CD8-positive, alpha-beta memory T cell (primary cell): ENCODE measurements at regions of chr5 and their contacts with region 1.

Region 1: GRCh38 chr5:52657247-52657645 is 130.5 kb upstream of the ITGA1 start:
- DNase-seq: peak in 2 of 5 donors; percentile 29 to 39
- H3K4me3 ChIP-seq: no peak overlapping the region
- H3K4me3 Mint-ChIP-seq: no peak overlapping the region
- H3K27ac ChIP-seq: no peak overlapping the region
- H3K27ac Mint-ChIP-seq: no peak overlapping the region
- H3K4me1 ChIP-seq: peaks cover 4% of the 10 kb centered on the region
- H3K4me1 Mint-ChIP-seq: peaks cover 0 to 5% (median 0%) of the 10 kb centered on the region in 3 donors
- H3K27me3 ChIP-seq: peaks cover 5% of the 10 kb centered on the region
- H3K27me3 Mint-ChIP-seq: peaks cover 2 to 25% of the 10 kb centered on the region in 2 donors

Region 2: GRCh38 chr5:50958852-50959457 is 1698.3 kb before region 1 on chr5:
- CTCF ChIA-PET with region 1: interaction called, 14 read pairs
- POLR2A ChIA-PET with region 1: no interaction called
- DNase-seq: no peak
- H3K4me3 ChIP-seq: no peak overlapping the region
- H3K4me3 Mint-ChIP-seq: no peak overlapping the region
- H3K27ac ChIP-seq: no peak overlapping the region
- H3K27ac Mint-ChIP-seq: no peak overlapping the region
- H3K4me1 ChIP-seq: peaks cover 11% of the 10 kb centered on the region
- H3K4me1 Mint-ChIP-seq: peaks cover 8 to 13% (median 13%) of the 10 kb centered on the region in 3 donors
- H3K27me3 ChIP-seq: peaks cover 12% of the 10 kb centered on the region
- H3K27me3 Mint-ChIP-seq: peaks cover 20 to 77% of the 10 kb centered on the region in 2 donors

Region 3: GRCh38 chr5:50965654-50966375 is 1691.4 kb before region 1 on chr5:
- CTCF ChIA-PET with region 1: interaction called, 5 read pairs
- POLR2A ChIA-PET with region 1: interaction called, 10 read pairs
- DNase-seq: no peak
- H3K4me3 ChIP-seq: no peak overlapping the region
- H3K4me3 Mint-ChIP-seq: peak overlapping the region in 6 of 7 donors; percentile 48 to 83 (median 68)
- H3K27ac ChIP-seq: no peak overlapping the region
- H3K27ac Mint-ChIP-seq: peak overlapping the region in 2 of 8 donors; percentile 32 to 63
- H3K4me1 ChIP-seq: peaks cover 41% of the 10 kb centered on the region
- H3K4me1 Mint-ChIP-seq: peaks cover 51 to 67% (median 65%) of the 10 kb centered on the region in 3 donors
- H3K27me3 ChIP-seq: peaks cover 72% of the 10 kb centered on the region
- H3K27me3 Mint-ChIP-seq: peaks cover 71 to 89% of the 10 kb centered on the region in 2 donors

Region 4: DNA sequence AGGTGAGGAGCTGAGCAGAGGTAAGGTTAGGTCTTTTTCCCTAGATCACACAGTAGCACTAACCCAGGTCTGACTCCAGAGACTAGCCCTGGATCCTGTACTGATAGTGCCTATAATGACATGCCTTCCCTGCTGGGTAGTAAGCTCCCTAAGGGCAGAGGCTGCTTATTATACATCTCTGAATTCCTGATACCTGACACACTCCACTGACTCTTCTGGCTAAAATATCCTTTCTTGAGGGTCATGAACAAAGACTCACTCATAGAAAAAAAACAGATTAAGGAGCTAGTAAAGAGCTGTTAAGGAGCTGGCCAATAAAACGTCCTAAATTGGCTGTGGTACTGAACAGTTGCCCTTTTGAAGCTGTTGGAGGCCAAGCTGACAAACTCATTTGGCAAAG is 18.5 kb before region 1 on chr5:
- CTCF ChIA-PET with region 1: no interaction called
- POLR2A ChIA-PET with region 1: no interaction called
- DNase-seq: no peak
- H3K4me3 ChIP-seq: no peak overlapping the region
- H3K4me3 Mint-ChIP-seq: no peak overlapping the region
- H3K27ac ChIP-seq: no peak overlapping the region
- H3K27ac Mint-ChIP-seq: no peak overlapping the region
- H3K4me1 ChIP-seq: no peaks in the 10 kb centered on the region
- H3K4me1 Mint-ChIP-seq: no peaks in the 10 kb centered on the region
- H3K27me3 ChIP-seq: no peaks in the 10 kb centered on the region
- H3K27me3 Mint-ChIP-seq: peaks cover 17 to 34% of the 10 kb centered on the region in 2 donors